Mammary epithelial cell (primary cell): ENCODE measurements at regions of chr19 and their contacts with region 1.

Region 1: GRCh38 chr19:15280915-15281683 is 48.9 kb upstream of the EPHX3 start:
- DNase-seq: peak; percentile 72
- H3K4me3 ChIP-seq: no peak overlapping the region
- H3K27ac ChIP-seq: peak overlapping the region; percentile 33
- H3K4me1 ChIP-seq: peaks cover 69% of the 10 kb centered on the region
- H3K27me3 ChIP-seq: no peaks in the 10 kb centered on the region
- CTCF ChIP-seq: peak in 1 of 2 donors; percentile 46

Region 2: GRCh38 chr19:15216342-15216741 is 64.8 kb before region 1 on chr19:
- CTCF ChIA-PET with region 1: no interaction called
- dilution Hi-C with region 1: loop called (anchors 5 kb)
- in situ Hi-C with region 1: no loop called
- intact Hi-C with region 1: no loop called
- DNase-seq: peak; percentile 39
- H3K4me3 ChIP-seq: no peak overlapping the region
- H3K27ac ChIP-seq: no peak overlapping the region
- H3K4me1 ChIP-seq: no peaks in the 10 kb centered on the region
- H3K27me3 ChIP-seq: no peaks in the 10 kb centered on the region
- CTCF ChIP-seq: no peak

Region 3: DNA sequence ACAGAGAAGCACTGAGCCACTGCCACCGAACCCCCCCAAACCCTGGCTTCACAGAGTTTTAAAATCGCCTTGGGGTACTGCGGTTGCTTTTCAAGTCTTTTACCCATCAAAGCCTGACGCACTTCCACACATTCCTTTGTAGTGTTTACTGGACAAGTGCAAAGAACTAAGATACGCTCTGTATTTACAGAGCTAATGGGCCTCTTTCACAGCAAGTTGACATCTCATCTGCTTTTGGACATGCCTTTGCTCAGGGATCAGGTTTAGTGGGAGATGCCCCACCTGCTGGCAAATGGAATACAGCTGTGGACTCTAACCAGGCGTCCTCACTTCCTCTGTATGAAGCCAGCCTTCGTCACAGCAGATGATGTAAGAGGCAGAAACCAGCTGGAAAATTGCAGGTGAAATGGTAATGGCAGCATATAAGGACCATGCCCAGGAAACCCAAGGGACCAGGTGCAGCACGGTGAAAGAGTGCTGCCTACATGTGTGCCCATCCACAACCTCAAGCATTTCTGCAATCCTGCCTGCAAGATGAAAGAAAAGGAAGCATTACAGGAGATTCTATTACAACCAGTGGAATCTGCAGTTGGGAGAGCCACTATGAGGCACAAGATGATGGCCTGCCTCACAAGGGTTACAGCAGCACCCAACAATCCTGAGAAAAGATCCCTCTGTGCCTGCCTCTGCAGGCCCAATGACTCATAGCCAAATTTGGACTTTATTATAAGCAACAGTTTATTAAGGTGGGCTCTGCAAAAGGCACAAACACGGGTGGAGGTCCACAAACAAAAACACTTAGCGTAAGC is 16.5 kb after region 1 on chr19:
- CTCF ChIA-PET with region 1: interaction called, 3 read pairs
- dilution Hi-C with region 1: no loop called
- in situ Hi-C with region 1: no loop called
- intact Hi-C with region 1: loop called (anchors 1 kb)
- DNase-seq: peak; percentile 65
- H3K4me3 ChIP-seq: no peak overlapping the region
- H3K27ac ChIP-seq: peak overlapping the region; percentile 19
- H3K4me1 ChIP-seq: peaks cover 67% of the 10 kb centered on the region
- H3K27me3 ChIP-seq: no peaks in the 10 kb centered on the region
- CTCF ChIP-seq: peak in 1 of 2 donors; percentile 44

Region 4: DNA sequence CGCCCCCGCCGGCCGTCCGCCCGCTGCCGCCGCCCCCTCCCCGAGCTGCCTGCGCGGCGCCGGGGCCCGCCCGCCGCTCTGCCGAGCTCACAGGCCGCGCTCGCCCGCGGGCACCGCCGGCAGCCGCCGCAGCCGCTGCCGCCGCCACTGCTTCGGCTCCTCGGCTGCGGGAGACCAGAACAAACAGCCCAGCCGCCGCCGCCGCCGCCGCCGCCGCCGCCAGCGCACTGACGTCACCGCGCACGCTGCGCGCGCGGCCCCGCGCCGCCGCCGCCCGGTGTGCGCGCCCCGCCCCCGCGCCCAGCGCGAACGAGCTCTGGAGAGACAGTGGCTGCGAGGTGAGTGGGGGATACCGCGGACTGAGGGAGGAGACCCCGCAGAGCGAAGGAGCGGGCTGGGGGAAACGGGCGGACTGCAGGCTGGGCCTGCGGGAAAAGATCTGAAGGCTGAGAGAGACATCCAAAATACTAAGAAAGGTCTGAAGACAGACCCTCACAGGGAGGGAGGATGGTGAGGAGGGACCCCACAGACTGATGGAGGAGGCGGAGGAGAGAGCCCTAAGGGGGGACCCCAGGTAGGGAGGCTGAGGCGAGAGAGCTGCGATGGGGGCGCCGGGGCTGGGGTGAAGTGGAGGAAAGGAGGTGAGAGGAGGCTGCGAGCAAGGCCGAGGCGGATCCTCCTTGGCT is 51.4 kb after region 1 on chr19 and contains the start of gene BRD4:
- CTCF ChIA-PET with region 1: interaction called, 3 read pairs
- dilution Hi-C with region 1: no loop called
- in situ Hi-C with region 1: no loop called
- intact Hi-C with region 1: loop called (anchors 1 kb)
- DNase-seq: peak; percentile 35
- H3K4me3 ChIP-seq: peak within 1 kb of the TSS; percentile 89 to 96 (median 94)
- H3K27ac ChIP-seq: peak within 1 kb of the TSS; percentile 86
- H3K4me1 ChIP-seq: peaks cover 9% of the 10 kb centered on the region
- H3K27me3 ChIP-seq: no peaks in the 10 kb centered on the region
- CTCF ChIP-seq: no peak
- total RNA-seq, gene BRD4: 22.2 to 113 TPM

Region 5: DNA sequence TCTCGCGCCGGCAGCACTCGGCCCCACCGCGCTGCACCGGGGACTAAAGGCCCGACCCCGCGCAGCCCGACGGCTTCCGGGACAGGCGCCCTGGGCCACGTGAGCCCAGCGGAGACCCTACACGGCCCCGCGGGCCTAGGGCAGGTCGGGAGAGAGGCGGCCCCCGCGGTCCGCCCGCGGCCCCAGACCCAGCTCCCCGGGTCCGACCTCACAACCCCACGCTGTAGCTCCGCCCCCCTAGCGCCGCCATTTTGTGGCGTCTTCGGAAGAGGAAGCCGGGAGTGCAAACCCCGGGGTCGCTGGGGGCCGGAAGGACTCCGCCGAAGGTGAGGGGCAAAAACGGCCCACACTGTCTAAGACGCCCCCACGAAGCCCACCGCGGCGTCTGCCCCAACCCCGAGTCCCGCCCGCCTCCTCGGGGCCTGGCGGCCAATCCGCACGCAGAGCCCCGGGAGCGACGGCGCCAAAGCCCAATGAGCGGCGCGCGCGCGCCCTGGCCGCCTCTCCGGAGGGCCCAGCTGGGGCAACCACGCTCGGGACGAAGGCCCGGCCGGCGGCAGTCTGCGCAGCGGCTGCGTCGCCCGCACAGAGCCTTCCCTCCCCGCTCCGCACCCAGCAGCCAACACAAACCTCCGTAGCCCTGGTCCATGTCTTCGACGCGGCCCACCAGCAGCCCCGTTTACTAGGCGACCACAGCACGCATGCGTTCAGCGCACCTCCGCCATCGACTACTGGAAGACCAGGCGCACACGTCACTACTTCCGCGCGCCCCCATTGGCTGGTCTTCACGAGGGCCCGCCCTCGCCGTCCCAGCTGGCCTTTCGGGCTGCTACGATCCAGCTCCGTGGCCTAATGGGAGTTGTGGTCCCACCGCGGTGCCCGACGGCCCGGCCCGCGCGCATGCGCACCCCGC is 98.2 kb after region 1 on chr19 and contains the start of gene AKAP8:
- CTCF ChIA-PET with region 1: no interaction called
- dilution Hi-C with region 1: loop called (anchors 5 kb)
- in situ Hi-C with region 1: no loop called
- intact Hi-C with region 1: loop called (anchors 1 kb)
- DNase-seq: peak; percentile 99
- H3K4me3 ChIP-seq: peak within 1 kb of the TSS; percentile 88 to 100 (median 91)
- H3K27ac ChIP-seq: peak within 1 kb of the TSS; percentile 86
- H3K4me1 ChIP-seq: peaks cover 24% of the 10 kb centered on the region
- H3K27me3 ChIP-seq: no peaks in the 10 kb centered on the region
- CTCF ChIP-seq: no peak
- total RNA-seq, gene AKAP8: 12.8 to 33.2 TPM